ENCODE measurements at regions of chr19 and their contacts with region 1.

Region 1: GRCh38 chr19:8505680-8506401 is 3.4 kb upstream of the PRAM1 start:
- DNase-seq: peak; percentile 84 to 92 (median 86)
- ATAC-seq: peak; percentile 88
- H3K4me3 ChIP-seq: peak overlapping the region in 1 of 2 donors; percentile 30
- H3K27ac ChIP-seq: peak overlapping the region; percentile 12 to 74 (median 52)
- H3K4me1 ChIP-seq: peaks cover 13% of the 10 kb centered on the region
- H3K27me3 ChIP-seq: no peaks in the 10 kb centered on the region
- CTCF ChIP-seq: peak; percentile 77 to 90 (median 83)
- POLR2A ChIP-seq: peak in 2 of 3 donors; percentile 22 to 36

Region 2: DNA sequence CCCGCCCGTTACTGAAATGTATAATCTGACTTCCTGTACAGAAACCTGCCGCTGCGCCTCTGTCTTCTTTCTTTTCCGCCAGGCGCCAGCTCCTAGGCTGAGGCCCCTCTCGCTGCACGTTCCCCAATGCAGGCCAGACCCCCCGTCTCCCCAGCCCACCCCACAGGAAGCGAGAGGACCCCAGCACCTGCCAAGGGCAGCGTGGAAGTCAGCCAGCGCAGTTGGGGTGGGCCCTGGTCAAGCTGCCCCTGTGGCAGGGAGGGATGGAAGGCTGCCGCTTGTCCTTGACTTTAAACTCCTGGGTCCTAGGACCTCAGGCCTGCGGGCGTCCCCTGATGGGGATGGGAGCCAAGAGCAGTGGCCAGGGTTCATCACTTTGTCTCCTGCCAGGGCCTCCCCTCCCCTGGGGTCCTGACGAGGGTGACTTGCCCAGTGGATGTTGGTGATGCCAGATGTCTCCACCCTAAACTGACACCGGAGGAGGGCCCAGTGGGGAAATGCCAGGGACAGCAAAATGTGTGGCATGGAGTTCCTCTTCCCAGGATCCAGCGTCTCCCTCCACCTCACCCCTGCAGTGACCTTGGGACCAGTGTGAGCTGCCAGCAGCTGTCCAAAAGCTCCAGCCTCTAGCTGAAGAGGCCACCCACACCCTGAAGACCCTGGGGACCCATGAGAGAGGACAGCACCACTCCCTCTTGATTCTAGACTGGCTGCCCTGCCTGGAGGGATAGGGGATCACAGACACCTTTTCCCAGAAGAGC is 101.3 kb before region 1 on chr19:
- intact Hi-C with region 1: loop called (anchors 10 kb)
- DNase-seq: peak in 2 of 4 donors; percentile 36 to 55
- ATAC-seq: no peak
- H3K4me3 ChIP-seq: no peak overlapping the region
- H3K27ac ChIP-seq: peak overlapping the region in 2 of 4 donors; percentile 14 to 47
- H3K4me1 ChIP-seq: peaks cover 8% of the 10 kb centered on the region
- H3K27me3 ChIP-seq: no peaks in the 10 kb centered on the region
- CTCF ChIP-seq: no peak
- POLR2A ChIP-seq: no peak

Region 3: GRCh38 chr19:8468761-8469373 is 37.0 kb before region 1 on chr19:
- intact Hi-C with region 1: no loop called
- DNase-seq: no peak
- ATAC-seq: no peak
- H3K4me3 ChIP-seq: no peak overlapping the region
- H3K27ac ChIP-seq: no peak overlapping the region
- H3K4me1 ChIP-seq: peaks cover 16% of the 10 kb centered on the region
- H3K27me3 ChIP-seq: no peaks in the 10 kb centered on the region
- CTCF ChIP-seq: no peak
- POLR2A ChIP-seq: no peak

Region 4: GRCh38 chr19:8631425-8631819 is 125.6 kb after region 1 on chr19:
- intact Hi-C with region 1: no loop called
- DNase-seq: peak; percentile 66 to 84 (median 74)
- ATAC-seq: peak; percentile 92
- H3K4me3 ChIP-seq: no peak overlapping the region
- H3K27ac ChIP-seq: peak overlapping the region; percentile 72 to 87 (median 81)
- H3K4me1 ChIP-seq: peaks cover 8% of the 10 kb centered on the region
- H3K27me3 ChIP-seq: no peaks in the 10 kb centered on the region
- CTCF ChIP-seq: no peak
- POLR2A ChIP-seq: peak in 1 of 3 donors; percentile 55